SK-N-SH (cell line): ENCODE measurements at regions of chr14 and their contacts with region 1.

Region 1: DNA sequence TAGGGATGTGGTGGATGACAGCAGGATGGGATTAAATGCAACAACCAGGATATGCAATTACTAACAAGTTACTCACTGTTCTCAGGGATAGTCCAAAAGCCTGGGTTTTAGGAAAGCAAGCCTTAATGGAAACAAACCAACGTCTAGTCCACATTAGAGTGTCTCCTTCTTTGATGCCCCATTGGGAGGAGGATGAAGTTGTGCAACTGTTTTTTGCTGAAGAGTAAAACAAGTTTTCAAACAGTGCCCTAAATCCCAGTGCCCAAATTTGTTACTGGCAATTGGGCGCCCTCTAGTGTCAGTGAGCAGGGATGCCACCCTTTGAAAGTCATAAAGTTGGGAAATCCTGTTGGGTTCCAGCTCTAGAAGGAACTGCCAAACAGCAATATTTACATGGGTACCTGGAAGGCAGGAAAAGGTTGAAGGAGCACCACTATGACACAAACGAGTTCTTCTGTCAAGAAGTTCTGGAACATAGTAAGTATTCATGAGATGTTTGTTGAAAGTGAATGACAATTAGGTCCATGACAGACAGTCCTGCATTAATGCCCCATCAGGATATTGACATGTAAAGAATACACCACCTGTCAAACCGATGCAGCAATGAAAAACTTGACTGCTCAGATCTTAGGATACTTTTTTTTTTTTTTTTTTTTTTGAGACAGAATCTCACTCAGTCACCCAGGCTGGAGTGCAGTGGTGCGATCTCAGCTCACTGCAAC is 11.1 kb upstream of the DPF3 start:
- DNase-seq: peak; percentile 65
- H3K4me3 ChIP-seq: no peak overlapping the region; a peak in 1 of 4 replicates
- H3K27ac ChIP-seq: no peak overlapping the region
- H3K4me1 ChIP-seq: peaks cover 0 to 33% of the 10 kb centered on the region in 2 experiments; a peak in 1 of 4 replicates
- H3K27me3 ChIP-seq: no peaks in the 10 kb centered on the region
- CTCF ChIP-seq: peak; percentile 96
- EP300 ChIP-seq: no peak
- RAD21 ChIP-seq: peak; percentile 96

Region 2: GRCh38 chr14:72523424-72524294 is 381.3 kb before region 1 on chr14:
- CTCF ChIA-PET with region 1: interaction called, 21 read pairs
- POLR2A ChIA-PET with region 1: no interaction called
- DNase-seq: no peak
- H3K4me3 ChIP-seq: no peak overlapping the region
- H3K27ac ChIP-seq: no peak overlapping the region
- H3K4me1 ChIP-seq: no peaks in the 10 kb centered on the region; a peak in 1 of 4 replicates
- H3K27me3 ChIP-seq: no peaks in the 10 kb centered on the region
- CTCF ChIP-seq: no peak
- EP300 ChIP-seq: no peak
- RAD21 ChIP-seq: no peak

Region 3: DNA sequence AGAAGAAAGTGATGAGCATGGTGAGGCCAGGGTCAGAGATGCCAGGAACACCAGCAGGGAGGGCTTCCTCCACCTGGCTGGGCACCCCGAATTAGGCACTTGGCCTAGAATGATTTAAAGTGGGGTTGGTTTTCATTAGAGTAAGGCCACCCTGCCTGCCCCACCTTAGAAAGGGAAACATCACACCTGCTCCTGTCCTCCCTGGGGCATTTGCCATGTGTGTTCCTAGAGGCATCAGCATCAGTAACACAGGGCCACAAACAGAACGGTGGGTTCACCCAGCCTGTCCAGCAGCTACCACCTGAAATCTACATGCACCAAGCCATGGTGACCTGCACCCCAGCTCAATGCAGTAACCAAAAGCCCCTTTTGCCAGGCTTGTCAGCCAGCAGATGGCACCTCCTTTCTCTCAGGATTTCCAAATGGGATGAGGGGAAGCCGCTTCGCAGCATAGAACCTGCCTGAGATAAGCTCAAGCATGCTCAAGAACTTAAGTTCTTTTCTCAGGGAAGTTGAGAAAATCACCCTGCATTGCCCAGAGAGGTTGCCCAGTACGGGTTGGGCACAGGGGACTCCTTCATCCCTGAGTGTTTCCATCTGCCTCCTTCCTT is 349.9 kb before region 1 on chr14:
- CTCF ChIA-PET with region 1: interaction called, 37 read pairs
- POLR2A ChIA-PET with region 1: no interaction called
- DNase-seq: no peak
- H3K4me3 ChIP-seq: no peak overlapping the region
- H3K27ac ChIP-seq: no peak overlapping the region
- H3K4me1 ChIP-seq: peaks cover 0 to 20% of the 10 kb centered on the region in 2 experiments; a peak in 1 of 4 replicates
- H3K27me3 ChIP-seq: no peaks in the 10 kb centered on the region
- CTCF ChIP-seq: 0 out of 2 replicates have a peak, but pooled peaks have one; percentile 8
- EP300 ChIP-seq: no peak
- RAD21 ChIP-seq: peak; percentile 26

Region 4: GRCh38 chr14:72893636-72894321 is 11.2 kb before region 1 on chr14 and contains the start of gene DPF3:
- CTCF ChIA-PET with region 1: interaction called, 22 read pairs
- POLR2A ChIA-PET with region 1: no interaction called
- DNase-seq: peak; percentile 95
- H3K4me3 ChIP-seq: peak within 1 kb of the TSS; percentile 80 to 99
- H3K27ac ChIP-seq: peak within 1 kb of the TSS in 1 of 2 experiments; percentile 69; a peak in 1 of 4 replicates
- H3K4me1 ChIP-seq: peaks cover 15 to 26% of the 10 kb centered on the region in 2 experiments; a peak in 3 of 4 replicates
- H3K27me3 ChIP-seq: peaks cover 17% of the 10 kb centered on the region
- CTCF ChIP-seq: no peak
- EP300 ChIP-seq: no peak
- RAD21 ChIP-seq: no peak
- polyA plus RNA-seq, gene DPF3: 2.8 and 4.1 TPM in 2 replicates

Region 5: DNA sequence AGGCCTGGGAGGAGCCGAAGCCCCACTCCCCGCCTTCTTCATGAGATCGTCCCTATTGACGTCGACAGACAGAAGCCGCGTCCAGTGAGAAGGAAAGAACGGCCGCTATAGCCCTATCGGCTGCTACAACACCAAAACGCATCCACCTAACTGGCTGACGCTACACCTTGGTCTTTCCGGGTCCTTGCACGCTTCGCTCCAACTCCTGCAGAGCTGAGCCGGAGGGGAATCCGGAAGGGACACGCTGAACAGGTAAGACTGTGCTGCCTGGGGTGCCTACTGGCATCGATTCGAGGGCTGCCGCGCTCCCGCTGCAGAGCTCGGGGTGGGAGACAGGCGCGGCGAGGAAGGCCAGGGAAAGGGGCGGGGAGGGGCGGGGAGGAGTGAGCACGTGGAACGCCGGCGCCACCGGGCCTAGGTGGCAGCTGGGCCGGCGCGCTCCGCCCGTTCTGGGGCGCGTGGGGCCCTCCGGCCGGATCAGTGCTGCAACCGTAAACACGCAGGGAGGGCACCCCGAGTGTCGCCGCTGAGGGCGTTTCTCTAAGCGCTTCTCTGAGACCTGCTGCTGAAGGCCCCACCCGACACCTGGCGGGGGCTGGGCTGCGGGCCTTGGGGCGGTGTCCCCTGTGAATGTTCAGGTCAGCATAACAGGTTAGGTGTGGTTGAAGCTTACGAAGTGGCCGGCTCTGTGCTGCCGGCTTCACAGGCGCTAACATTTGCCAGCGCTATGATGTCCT is 21.5 kb after region 1 on chr14 and contains the start of gene DCAF4:
- CTCF ChIA-PET with region 1: interaction called, 15 read pairs
- POLR2A ChIA-PET with region 1: no interaction called
- DNase-seq: peak; percentile 99
- H3K4me3 ChIP-seq: peak within 1 kb of the TSS; percentile 79 to 93
- H3K27ac ChIP-seq: peak within 1 kb of the TSS; percentile 12 to 50; a peak in 3 of 4 replicates
- H3K4me1 ChIP-seq: peaks cover 0 to 12% of the 10 kb centered on the region in 2 experiments; a peak in 1 of 4 replicates
- H3K27me3 ChIP-seq: no peaks in the 10 kb centered on the region
- CTCF ChIP-seq: no peak
- EP300 ChIP-seq: no peak
- RAD21 ChIP-seq: no peak
- polyA plus RNA-seq, gene DCAF4: 17.9 and 27.8 TPM in 2 replicates